HepG2 (cell line): ENCODE measurements at regions of chr19 and their contacts with region 1.

Region 1: DNA sequence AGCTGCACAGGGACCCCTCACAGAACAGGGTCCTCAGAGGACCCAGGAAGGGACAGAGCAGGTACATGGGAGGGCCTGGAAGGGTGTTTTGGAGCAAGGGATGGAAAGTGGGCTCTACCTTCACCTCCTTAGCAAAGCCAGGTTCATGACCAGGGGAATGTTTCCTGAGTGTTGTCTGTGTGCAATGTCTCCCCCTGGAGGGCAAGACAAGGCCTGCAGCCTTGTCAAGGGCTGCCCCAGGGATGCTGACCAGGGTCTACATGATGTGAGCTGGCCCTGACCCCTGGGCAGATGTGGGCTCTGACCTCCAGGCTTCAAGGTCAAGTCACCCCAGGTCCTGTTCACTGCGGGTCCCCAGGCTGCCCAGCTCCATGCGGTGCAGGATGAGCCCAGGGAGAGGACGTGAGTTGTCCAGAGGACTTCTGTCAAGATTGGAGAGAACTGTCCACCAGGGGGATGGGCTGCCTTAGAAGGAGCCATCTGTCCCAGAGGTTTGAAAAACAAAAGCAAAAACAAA is 1.0 kb upstream of the CEACAM1 start:
- DNase-seq: peak; percentile 78
- ATAC-seq: peak; percentile 84
- H3K4me3 ChIP-seq: peak overlapping the region; percentile 67 to 83 (median 72)
- H3K27ac ChIP-seq: peak overlapping the region; percentile 74
- H3K4me1 ChIP-seq: peaks cover 49% of the 10 kb centered on the region
- H3K27me3 ChIP-seq: no peaks in the 10 kb centered on the region; a peak in 1 of 5 replicates
- CTCF ChIP-seq: peak; percentile 99
- EP300 ChIP-seq: no peak
- POLR2A ChIP-seq: no peak
- RAD21 ChIP-seq: peak; percentile 96

Region 2: GRCh38 chr19:42423462-42424344 is 105.6 kb before region 1 on chr19:
- CTCF ChIA-PET with region 1: interaction called, 13 read pairs
- POLR2A ChIA-PET with region 1: interaction called, 3 read pairs
- in situ Hi-C with region 1: no loop called
- intact Hi-C with region 1: no loop called
- DNase-seq: no peak
- ATAC-seq: no peak
- H3K4me3 ChIP-seq: peak overlapping the region in 1 of 3 experiments; percentile 32; a peak in 1 of 6 replicates
- H3K27ac ChIP-seq: no peak overlapping the region
- H3K4me1 ChIP-seq: peaks cover 67% of the 10 kb centered on the region
- H3K27me3 ChIP-seq: peaks cover 4 to 36% of the 10 kb centered on the region in 2 experiments
- CTCF ChIP-seq: no peak
- EP300 ChIP-seq: no peak
- POLR2A ChIP-seq: no peak
- RAD21 ChIP-seq: no peak

Region 3: DNA sequence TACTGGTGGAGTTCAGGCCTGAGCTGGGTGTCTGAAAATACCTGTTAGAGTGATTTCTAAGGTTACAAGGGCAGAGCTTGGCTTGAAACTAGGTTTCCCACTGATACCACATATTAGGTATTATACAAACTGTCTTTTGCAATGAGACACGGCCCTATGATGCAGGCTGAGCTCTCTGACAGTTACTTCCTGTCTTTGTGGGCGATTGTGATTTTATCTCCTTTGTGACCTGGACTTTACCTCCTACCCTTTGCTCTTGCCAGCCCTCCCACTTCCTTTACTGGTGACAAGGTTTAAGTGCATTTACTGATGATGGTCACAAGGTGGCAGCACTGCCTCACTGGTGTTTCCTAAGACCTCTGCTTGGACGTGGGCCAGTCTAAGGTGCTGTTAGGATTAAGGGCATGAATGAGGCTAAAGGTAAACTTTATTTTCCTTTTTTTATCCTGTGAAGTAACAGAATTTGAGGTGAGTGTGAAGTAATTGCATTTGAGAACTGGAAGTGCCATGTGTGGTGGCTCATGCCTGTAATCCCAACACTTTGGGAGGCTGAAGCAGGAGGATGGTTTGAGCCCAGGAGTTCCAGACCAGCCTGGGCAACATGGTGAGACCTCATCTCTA is 78.9 kb before region 1 on chr19:
- CTCF ChIA-PET with region 1: interaction called, 99 read pairs
- POLR2A ChIA-PET with region 1: interaction called, 69 read pairs
- in situ Hi-C with region 1: loop called (anchors 5 kb)
- intact Hi-C with region 1: loop called (anchors 1 kb)
- DNase-seq: peak; percentile 98
- ATAC-seq: peak; percentile 99
- H3K4me3 ChIP-seq: peak overlapping the region in 1 of 3 experiments; percentile 25; a peak in 1 of 6 replicates
- H3K27ac ChIP-seq: peak overlapping the region; percentile 71
- H3K4me1 ChIP-seq: peaks cover 79% of the 10 kb centered on the region
- H3K27me3 ChIP-seq: no peaks in the 10 kb centered on the region
- CTCF ChIP-seq: peak; percentile 98
- EP300 ChIP-seq: peak; percentile 62 to 92; a peak in 3 of 4 replicates
- POLR2A ChIP-seq: peak in 1 of 2 experiments; percentile 38; a peak in 1 of 4 replicates
- RAD21 ChIP-seq: peak; percentile 97

Region 4: GRCh38 chr19:42465827-42466280 is 63.5 kb before region 1 on chr19:
- CTCF ChIA-PET with region 1: interaction called, 4 read pairs
- POLR2A ChIA-PET with region 1: interaction called, 10 read pairs
- in situ Hi-C with region 1: no loop called
- intact Hi-C with region 1: no loop called
- DNase-seq: no peak
- ATAC-seq: no peak
- H3K4me3 ChIP-seq: no peak overlapping the region
- H3K27ac ChIP-seq: no peak overlapping the region
- H3K4me1 ChIP-seq: peaks cover 73% of the 10 kb centered on the region
- H3K27me3 ChIP-seq: no peaks in the 10 kb centered on the region
- CTCF ChIP-seq: no peak
- EP300 ChIP-seq: no peak
- POLR2A ChIP-seq: no peak
- RAD21 ChIP-seq: no peak

Region 5: GRCh38 chr19:42487032-42487797 is 42.1 kb before region 1 on chr19:
- CTCF ChIA-PET with region 1: no interaction called
- POLR2A ChIA-PET with region 1: interaction called, 14 read pairs
- in situ Hi-C with region 1: no loop called
- intact Hi-C with region 1: loop called (anchors 1 kb)
- DNase-seq: no peak
- ATAC-seq: no peak
- H3K4me3 ChIP-seq: no peak overlapping the region
- H3K27ac ChIP-seq: peak overlapping the region; percentile 96
- H3K4me1 ChIP-seq: peaks cover 89% of the 10 kb centered on the region
- H3K27me3 ChIP-seq: no peaks in the 10 kb centered on the region
- CTCF ChIP-seq: no peak
- EP300 ChIP-seq: no peak
- POLR2A ChIP-seq: no peak
- RAD21 ChIP-seq: no peak

Region 6: GRCh38 chr19:42508892-42509444 is 20.3 kb before region 1 on chr19:
- CTCF ChIA-PET with region 1: no interaction called
- POLR2A ChIA-PET with region 1: interaction called, 17 read pairs
- in situ Hi-C with region 1: no loop called
- intact Hi-C with region 1: no loop called
- DNase-seq: no peak
- ATAC-seq: no peak
- H3K4me3 ChIP-seq: no peak overlapping the region
- H3K27ac ChIP-seq: no peak overlapping the region
- H3K4me1 ChIP-seq: peaks cover 31% of the 10 kb centered on the region
- H3K27me3 ChIP-seq: no peaks in the 10 kb centered on the region
- CTCF ChIP-seq: no peak
- EP300 ChIP-seq: no peak
- POLR2A ChIP-seq: no peak
- RAD21 ChIP-seq: no peak